Right ventricle myocardium inferior (tissue), 1 donor: ENCODE measurements at regions of chr1 and their contacts with region 1.

Region 1: GRCh38 chr1:206544562-206545257 is 37.4 kb downstream of the RASSF5 start:
- DNase-seq: peak; percentile 79
- ATAC-seq: peak; percentile 62

Region 2: GRCh38 chr1:206583707-206584648 is 39.3 kb after region 1 on chr1:
- intact Hi-C with region 1: loop called (anchors 1 kb)
- DNase-seq: peak; percentile 79
- ATAC-seq: peak; percentile 54